ENCODE measurements at regions of chr19 and their contacts with region 1.

Region 1: DNA sequence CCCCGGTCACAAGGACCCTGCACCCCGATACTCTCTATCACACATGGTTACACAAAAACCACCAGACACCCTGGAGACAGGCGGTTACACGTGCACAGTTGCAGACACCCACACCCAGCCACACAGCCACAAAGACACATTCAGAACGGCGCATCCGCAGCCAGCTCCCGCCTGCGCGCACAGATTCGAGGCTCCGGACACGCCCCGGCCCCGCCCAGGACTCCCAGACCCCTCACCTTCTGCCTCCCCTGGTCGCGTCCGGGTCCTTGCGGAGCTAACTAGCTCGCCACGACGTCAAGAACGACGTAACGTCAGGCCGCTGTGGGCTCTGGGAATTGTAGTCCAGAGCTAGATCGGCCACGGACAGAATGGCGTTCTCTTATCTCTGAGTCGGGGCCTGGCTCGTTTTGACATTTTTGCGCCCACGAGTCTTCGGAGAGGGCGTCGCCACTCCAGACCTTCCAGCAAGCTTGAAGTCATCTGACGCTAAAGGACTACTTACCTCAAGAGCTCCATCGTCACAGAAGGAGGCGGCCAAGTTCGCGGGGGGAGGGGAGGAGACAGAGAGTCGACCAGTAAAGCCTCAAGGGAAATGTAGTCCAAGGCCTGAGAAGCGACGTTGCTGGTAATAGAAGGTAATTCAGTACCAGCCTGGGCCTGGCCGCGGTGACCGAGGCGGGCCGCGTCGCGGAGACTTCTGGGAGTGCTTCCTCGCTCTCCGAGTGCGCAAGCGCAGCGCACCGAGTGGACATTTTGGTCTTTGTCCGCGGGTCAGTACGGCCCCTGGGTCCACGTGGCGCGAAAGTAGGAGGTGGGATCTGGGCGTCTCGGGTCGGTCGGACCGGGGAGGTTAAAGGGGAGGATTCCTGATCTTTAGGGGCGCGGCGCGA is at the starts of genes ZNF146 and ZNF565:
- DNase-seq: peak; percentile 87 to 97 (median 96)
- ATAC-seq: peak; percentile 94
- H3K4me3 ChIP-seq: peak within 1 kb of the TSS; percentile 97
- H3K4me3 Mint-ChIP-seq: no peak within 1 kb of the TSS
- H3K27ac ChIP-seq: peak within 1 kb of the TSS; percentile 94
- H3K27ac Mint-ChIP-seq: peak within 1 kb of the TSS in 2 of 9 donors; percentile 38 to 41
- H3K4me1 ChIP-seq: peaks cover 14 to 19% of the 10 kb centered on the region in 2 donors
- H3K4me1 Mint-ChIP-seq: peaks cover 13 to 28% (median 25%) of the 10 kb centered on the region in 7 donors
- H3K27me3 ChIP-seq: no peaks in the 10 kb centered on the region
- H3K27me3 Mint-ChIP-seq: no peaks in the 10 kb centered on the region
- total RNA-seq, gene ZNF146: 27.7 to 77.4 (median 57.7) TPM
- total RNA-seq, gene ZNF565: 2.7 to 11.6 (median 7.8) TPM

Region 2: GRCh38 chr19:36054119-36054732 is 160.4 kb before region 1 on chr19 and contains the start of gene THAP8:
- CTCF ChIA-PET with region 1: no interaction called
- POLR2A ChIA-PET with region 1: no interaction called
- intact Hi-C with region 1: loop called (anchors 1 kb)
- DNase-seq: peak; percentile 96 to 100 (median 100)
- ATAC-seq: peak; percentile 91
- H3K4me3 ChIP-seq: peak within 1 kb of the TSS; percentile 84
- H3K4me3 Mint-ChIP-seq: peak within 1 kb of the TSS; percentile 91 to 100 (median 99)
- H3K27ac ChIP-seq: peak within 1 kb of the TSS; percentile 83
- H3K27ac Mint-ChIP-seq: peak within 1 kb of the TSS; percentile 94 to 100 (median 98)
- H3K4me1 ChIP-seq: peaks cover 8 to 10% of the 10 kb centered on the region in 2 donors
- H3K4me1 Mint-ChIP-seq: peaks cover 6 to 43% (median 34%) of the 10 kb centered on the region in 7 donors
- H3K27me3 ChIP-seq: no peaks in the 10 kb centered on the region
- H3K27me3 Mint-ChIP-seq: no peaks in the 10 kb centered on the region
- total RNA-seq, gene THAP8: 2.2 to 6.6 (median 6.1) TPM

Region 3: GRCh38 chr19:36378625-36379509 is 164.2 kb after region 1 on chr19 and contains the start of gene ZFP14:
- CTCF ChIA-PET with region 1: no interaction called
- POLR2A ChIA-PET with region 1: interaction called, 5 read pairs
- intact Hi-C with region 1: loop called (anchors 1 kb)
- DNase-seq: peak; percentile 86 to 95 (median 93)
- ATAC-seq: peak; percentile 99
- H3K4me3 ChIP-seq: peak within 1 kb of the TSS; percentile 86
- H3K4me3 Mint-ChIP-seq: peak within 1 kb of the TSS; percentile 82 to 98 (median 94)
- H3K27ac ChIP-seq: peak within 1 kb of the TSS; percentile 86
- H3K27ac Mint-ChIP-seq: peak within 1 kb of the TSS; percentile 55 to 98 (median 94)
- H3K4me1 ChIP-seq: peaks cover 0 to 10% of the 10 kb centered on the region in 2 donors
- H3K4me1 Mint-ChIP-seq: peaks cover 9 to 23% (median 21%) of the 10 kb centered on the region in 7 donors
- H3K27me3 ChIP-seq: no peaks in the 10 kb centered on the region
- H3K27me3 Mint-ChIP-seq: no peaks in the 10 kb centered on the region
- total RNA-seq, gene ZFP14: 5.3 to 24.0 (median 9.2) TPM

Region 4: GRCh38 chr19:36665832-36666231 is 451.2 kb after region 1 on chr19:
- CTCF ChIA-PET with region 1: no interaction called
- POLR2A ChIA-PET with region 1: no interaction called
- intact Hi-C with region 1: loop called in 1 of 2 experiments (anchors 2 kb)
- DNase-seq: peak in 1 of 9 donors; percentile 2
- ATAC-seq: no peak
- H3K4me3 ChIP-seq: peak overlapping the region; percentile 88
- H3K4me3 Mint-ChIP-seq: peak overlapping the region; percentile 91 to 100 (median 98)
- H3K27ac ChIP-seq: no peak overlapping the region
- H3K27ac Mint-ChIP-seq: peak overlapping the region; percentile 29 to 99 (median 93)
- H3K4me1 ChIP-seq: peaks cover 0 to 10% of the 10 kb centered on the region in 2 donors
- H3K4me1 Mint-ChIP-seq: peaks cover 17 to 42% (median 35%) of the 10 kb centered on the region in 7 donors
- H3K27me3 ChIP-seq: no peaks in the 10 kb centered on the region
- H3K27me3 Mint-ChIP-seq: no peaks in the 10 kb centered on the region

Region 5: GRCh38 chr19:36915992-36916830 is 701.6 kb after region 1 on chr19 and contains the starts of genes ZNF568 and ZNF829:
- CTCF ChIA-PET with region 1: no interaction called
- POLR2A ChIA-PET with region 1: no interaction called
- intact Hi-C with region 1: loop called in 1 of 2 experiments (anchors 1 kb)
- DNase-seq: peak; percentile 78 to 96 (median 93)
- ATAC-seq: peak; percentile 97
- H3K4me3 ChIP-seq: peak within 1 kb of the TSS; percentile 95
- H3K4me3 Mint-ChIP-seq: peak within 1 kb of the TSS; percentile 87 to 99 (median 95)
- H3K27ac ChIP-seq: peak within 1 kb of the TSS; percentile 94
- H3K27ac Mint-ChIP-seq: peak within 1 kb of the TSS; percentile 90 to 97 (median 94)
- H3K4me1 ChIP-seq: peaks cover 8 to 13% of the 10 kb centered on the region in 2 donors
- H3K4me1 Mint-ChIP-seq: peaks cover 19 to 46% (median 29%) of the 10 kb centered on the region in 7 donors
- H3K27me3 ChIP-seq: no peaks in the 10 kb centered on the region
- H3K27me3 Mint-ChIP-seq: no peaks in the 10 kb centered on the region
- total RNA-seq, gene ZNF568: 8.2 to 18.0 (median 9.3) TPM
- total RNA-seq, gene ZNF829: 2.6 to 9.0 (median 6.3) TPM

Region 6: DNA sequence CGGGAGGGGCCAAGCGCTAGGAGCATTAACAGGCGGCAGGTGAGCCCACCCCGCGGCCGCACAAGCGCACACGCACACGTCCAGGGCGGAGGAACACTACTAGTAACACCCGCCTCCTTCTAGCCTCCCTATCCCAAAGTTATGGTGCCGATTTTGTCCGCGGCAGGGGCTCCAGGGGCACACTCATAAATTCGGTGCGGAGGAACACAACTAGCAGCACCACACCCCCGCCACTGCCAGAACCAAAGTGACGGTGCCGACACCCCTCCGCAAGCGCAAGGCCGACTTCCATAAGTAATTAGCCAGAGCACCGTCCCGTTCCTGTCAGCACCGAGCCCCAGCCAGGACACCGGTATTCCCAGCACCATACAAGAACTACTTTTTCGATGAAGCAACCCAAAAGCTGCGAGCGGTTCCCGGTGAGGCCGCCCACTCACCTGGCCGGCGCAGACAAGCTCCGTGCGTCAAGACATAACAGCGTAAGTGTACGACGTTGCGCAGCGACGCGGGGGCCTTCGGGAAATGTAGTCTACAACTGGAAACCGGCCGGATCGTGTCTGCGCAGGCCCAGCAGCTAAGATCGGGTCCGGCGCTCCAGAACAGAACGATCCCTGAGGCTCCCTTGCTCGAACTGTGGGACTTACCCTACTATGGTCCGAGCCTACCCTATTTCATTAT is 1379.8 kb after region 1 on chr19 and contains the starts of genes ZNF540 and ZNF571:
- CTCF ChIA-PET with region 1: no interaction called
- POLR2A ChIA-PET with region 1: interaction called, 6 read pairs
- intact Hi-C with region 1: loop called in 1 of 2 experiments (anchors 1 kb)
- DNase-seq: peak; percentile 70 to 95 (median 92)
- ATAC-seq: peak; percentile 96
- H3K4me3 ChIP-seq: peak within 1 kb of the TSS; percentile 80
- H3K4me3 Mint-ChIP-seq: peak within 1 kb of the TSS; percentile 94 to 100 (median 98)
- H3K27ac ChIP-seq: peak within 1 kb of the TSS; percentile 93
- H3K27ac Mint-ChIP-seq: peak within 1 kb of the TSS; percentile 93 to 100 (median 99)
- H3K4me1 ChIP-seq: peaks cover 7 to 18% of the 10 kb centered on the region in 2 donors
- H3K4me1 Mint-ChIP-seq: peaks cover 13 to 56% (median 39%) of the 10 kb centered on the region in 7 donors
- H3K27me3 ChIP-seq: no peaks in the 10 kb centered on the region
- H3K27me3 Mint-ChIP-seq: no peaks in the 10 kb centered on the region
- total RNA-seq, gene ZNF540: 0.99 to 22.7 (median 17.6) TPM
- total RNA-seq, gene ZNF571: 1.5 to 12.4 (median 9.0) TPM

Measured in naive thymus-derived CD4-positive, alpha-beta T cell (primary cell).